GM13977 (cell line): ENCODE measurements at regions of chr10 and their contacts with region 1.

Region 1: DNA sequence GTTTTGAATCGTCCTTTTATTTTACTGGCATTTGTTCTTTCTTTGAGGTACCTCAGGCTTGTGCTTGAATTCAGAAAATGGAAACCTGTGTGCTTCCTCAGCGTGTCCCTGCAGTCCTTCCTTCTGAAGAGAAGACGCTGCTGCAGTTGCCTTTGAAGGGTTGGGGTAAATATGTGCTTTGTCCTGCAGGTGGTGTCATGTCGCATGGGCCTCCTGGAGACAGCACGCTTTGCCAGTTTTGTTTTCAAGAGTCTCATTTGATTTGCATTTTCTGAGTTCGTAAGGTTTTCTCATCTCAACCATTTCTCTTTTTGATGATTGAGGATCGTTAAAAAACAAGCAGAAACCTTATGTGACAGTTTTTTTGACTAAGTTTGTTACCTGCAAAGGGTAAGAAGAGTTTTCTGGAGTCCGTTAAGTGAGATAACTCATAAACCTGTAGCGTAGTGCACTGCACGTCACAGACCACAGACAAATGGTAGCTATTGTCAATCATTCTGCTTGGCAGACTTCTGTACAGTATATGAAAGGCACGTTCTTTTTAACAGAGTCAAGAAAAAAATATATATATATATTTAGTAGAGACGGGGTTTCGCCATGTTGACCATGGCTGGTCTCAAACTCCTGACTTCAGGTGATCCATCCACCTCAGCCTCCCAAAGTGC is 57.0 kb downstream of the CDC123 start:
- DNase-seq: peak; percentile 55
- CTCF ChIP-seq: peak; percentile 62

Region 2: GRCh38 chr10:11886851-11887250 is 366.2 kb before region 1 on chr10:
- in situ Hi-C with region 1: no loop called
- DNase-seq: peak; percentile 65
- CTCF ChIP-seq: no peak

Region 3: DNA sequence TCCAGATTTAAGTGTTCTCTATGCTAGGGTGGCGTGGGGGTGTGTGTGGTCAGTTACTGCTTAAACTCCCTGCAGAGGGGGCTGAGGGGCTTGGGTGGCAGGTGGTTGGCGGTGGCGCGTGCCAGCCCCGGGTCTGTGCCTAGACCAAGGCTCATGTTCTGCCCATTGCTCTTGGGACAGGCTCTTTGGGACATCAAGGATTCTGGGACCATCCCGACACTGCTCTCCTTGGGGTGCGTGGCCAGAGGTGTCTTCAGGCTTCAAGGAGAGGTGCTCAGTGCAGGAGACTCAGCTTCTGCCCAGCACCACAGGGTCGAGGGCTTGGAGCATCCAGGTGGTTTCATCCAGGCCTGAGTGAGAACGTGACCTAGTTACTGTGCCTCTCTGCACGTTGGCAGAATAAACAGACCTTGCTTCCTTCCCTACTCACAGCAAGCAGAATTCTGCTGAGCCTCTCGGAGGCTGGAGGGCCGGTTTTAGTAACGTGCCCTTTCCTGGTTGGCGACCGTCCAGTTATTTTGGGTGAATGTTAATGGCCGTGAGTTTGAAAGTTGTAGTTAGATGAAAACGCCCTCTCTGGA is 136.2 kb after region 1 on chr10:
- in situ Hi-C with region 1: no loop called
- DNase-seq: no peak
- CTCF ChIP-seq: no peak

Region 4: GRCh38 chr10:12902135-12902572 is 649.1 kb after region 1 on chr10:
- in situ Hi-C with region 1: loop called (anchors 10 kb)
- DNase-seq: peak; percentile 77
- CTCF ChIP-seq: peak; percentile 74